ENCODE measurements at regions of chr12 and their contacts with region 1.

Region 1: GRCh38 chr12:27343255-27344000 is 10.8 kb downstream of the BMAL2 start:
- DNase-seq: no peak
- H3K4me3 ChIP-seq: no peak overlapping the region
- H3K27ac ChIP-seq: no peak overlapping the region
- H3K4me1 ChIP-seq: no peaks in the 10 kb centered on the region
- H3K27me3 ChIP-seq: no peaks in the 10 kb centered on the region
- CTCF ChIP-seq: no peak

Region 2: GRCh38 chr12:25829192-25829591 is 1514.2 kb before region 1 on chr12:
- intact Hi-C with region 1: loop called (anchors 10 kb)
- DNase-seq: peak; percentile 46 to 70
- H3K4me3 ChIP-seq: no peak overlapping the region
- H3K27ac ChIP-seq: peak overlapping the region; percentile 14 to 30
- H3K4me1 ChIP-seq: peaks cover 0 to 27% (median 9%) of the 10 kb centered on the region in 4 donors
- H3K27me3 ChIP-seq: no peaks in the 10 kb centered on the region
- CTCF ChIP-seq: no peak

Region 3: GRCh38 chr12:27453421-27453820 is 110.0 kb after region 1 on chr12:
- intact Hi-C with region 1: no loop called
- DNase-seq: no peak
- H3K4me3 ChIP-seq: no peak overlapping the region
- H3K27ac ChIP-seq: no peak overlapping the region
- H3K4me1 ChIP-seq: no peaks in the 10 kb centered on the region
- H3K27me3 ChIP-seq: no peaks in the 10 kb centered on the region
- CTCF ChIP-seq: no peak

Region 4: DNA sequence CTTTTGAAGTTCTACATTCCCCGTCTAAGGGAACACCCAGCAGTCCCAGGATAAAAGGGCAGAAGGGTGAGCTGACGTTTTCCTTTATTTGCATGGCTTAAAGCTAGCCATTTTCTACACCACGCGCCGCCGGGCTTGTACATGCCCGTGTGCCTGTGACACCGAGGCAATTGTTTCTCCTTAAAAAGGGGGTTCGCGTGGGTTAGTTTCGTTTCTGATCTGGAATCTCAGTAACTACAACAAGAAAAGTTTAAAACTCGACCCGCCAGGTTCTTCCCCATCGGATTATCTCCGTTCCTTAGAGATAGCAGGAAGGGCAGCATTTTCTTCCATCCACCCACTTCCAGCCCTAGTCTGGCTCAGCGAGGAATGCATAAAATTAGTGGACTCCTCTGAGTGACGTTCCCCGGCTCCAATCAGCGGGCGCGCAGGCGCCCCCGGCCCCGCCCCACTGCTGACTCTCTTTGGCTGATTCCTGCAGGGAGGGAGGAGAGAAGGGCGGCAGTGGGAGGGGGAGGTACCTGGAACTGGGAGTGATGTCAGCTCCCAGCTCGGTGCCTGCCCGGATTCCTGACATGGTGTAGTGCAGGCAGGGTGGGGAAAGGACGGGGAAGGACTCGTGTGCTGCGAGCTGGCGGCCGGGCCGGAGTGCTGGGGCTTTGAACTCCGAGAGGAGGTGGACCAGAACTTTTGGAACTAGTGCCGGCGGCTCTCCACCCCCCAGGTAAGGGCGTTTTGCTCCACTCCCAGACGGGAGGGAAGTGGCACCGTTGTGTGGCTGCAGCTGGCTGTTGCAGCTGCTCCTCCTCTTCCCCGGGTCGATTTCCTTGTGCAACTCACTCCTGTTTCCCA is 180.4 kb after region 1 on chr12 and contains the start of gene PPFIBP1:
- intact Hi-C with region 1: no loop called
- DNase-seq: peak; percentile 99 to 100
- H3K4me3 ChIP-seq: peak within 1 kb of the TSS; percentile 78 to 84
- H3K27ac ChIP-seq: peak within 1 kb of the TSS; percentile 85 to 91
- H3K4me1 ChIP-seq: peaks cover 0 to 31% (median 7%) of the 10 kb centered on the region in 4 donors
- H3K27me3 ChIP-seq: no peaks in the 10 kb centered on the region
- CTCF ChIP-seq: peak; percentile 31 to 32

Region 5: GRCh38 chr12:28121433-28121832 is 778.0 kb after region 1 on chr12:
- intact Hi-C with region 1: no loop called
- DNase-seq: no peak
- H3K4me3 ChIP-seq: no peak overlapping the region
- H3K27ac ChIP-seq: no peak overlapping the region
- H3K4me1 ChIP-seq: no peaks in the 10 kb centered on the region
- H3K27me3 ChIP-seq: no peaks in the 10 kb centered on the region
- CTCF ChIP-seq: no peak

Measured in tibial artery (tissue), 4 donors.